Activated naive CD4-positive, alpha-beta T cell treated with anti-CD3 and anti-CD28 coated beads for 36 hours (primary cell): ENCODE measurements at regions of chr17 and their contacts with region 1.

Region 1: DNA sequence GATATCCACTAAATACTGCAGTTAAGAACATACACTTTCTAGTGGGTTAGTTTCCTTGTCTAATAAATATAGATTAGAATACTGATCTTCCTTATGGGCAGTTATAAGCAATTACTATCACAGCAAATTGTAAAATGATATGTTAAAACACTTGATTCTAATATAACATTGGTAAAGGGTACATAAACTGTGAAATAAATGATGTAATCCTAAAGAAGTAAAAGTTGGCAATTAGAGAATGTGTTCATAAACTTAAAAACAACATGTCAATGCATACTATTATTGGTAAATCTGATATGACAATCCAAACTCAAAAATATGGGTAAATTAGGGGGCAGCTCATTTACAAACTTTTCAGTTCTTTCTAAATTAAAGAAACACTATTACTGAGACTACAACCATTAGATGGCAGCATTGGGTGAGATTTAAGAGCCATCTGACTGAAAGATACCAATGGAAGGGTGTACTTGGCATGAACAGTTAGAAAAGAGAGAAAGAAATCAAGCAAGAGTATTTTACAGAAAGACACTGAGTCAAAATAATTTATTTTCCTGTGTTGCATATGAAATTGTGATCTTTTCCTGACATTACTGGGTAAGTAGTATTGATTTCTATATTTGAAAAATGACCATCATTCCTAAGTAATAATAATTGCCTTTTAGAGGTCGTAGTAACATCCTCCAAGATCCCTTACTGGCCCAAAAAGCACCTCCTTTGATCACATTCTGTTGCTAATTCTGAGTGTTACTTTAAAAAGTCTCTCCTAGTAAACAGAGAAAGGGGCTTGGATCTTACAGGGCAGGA is 119.6 kb downstream of the SPAG9 start:
- DNase-seq: peak; percentile 18
- H3K4me3 Mint-ChIP-seq: no peak overlapping the region
- H3K27ac Mint-ChIP-seq: no peak overlapping the region
- H3K4me1 Mint-ChIP-seq: no peaks in the 10 kb centered on the region
- H3K27me3 Mint-ChIP-seq: no peaks in the 10 kb centered on the region

Region 2: DNA sequence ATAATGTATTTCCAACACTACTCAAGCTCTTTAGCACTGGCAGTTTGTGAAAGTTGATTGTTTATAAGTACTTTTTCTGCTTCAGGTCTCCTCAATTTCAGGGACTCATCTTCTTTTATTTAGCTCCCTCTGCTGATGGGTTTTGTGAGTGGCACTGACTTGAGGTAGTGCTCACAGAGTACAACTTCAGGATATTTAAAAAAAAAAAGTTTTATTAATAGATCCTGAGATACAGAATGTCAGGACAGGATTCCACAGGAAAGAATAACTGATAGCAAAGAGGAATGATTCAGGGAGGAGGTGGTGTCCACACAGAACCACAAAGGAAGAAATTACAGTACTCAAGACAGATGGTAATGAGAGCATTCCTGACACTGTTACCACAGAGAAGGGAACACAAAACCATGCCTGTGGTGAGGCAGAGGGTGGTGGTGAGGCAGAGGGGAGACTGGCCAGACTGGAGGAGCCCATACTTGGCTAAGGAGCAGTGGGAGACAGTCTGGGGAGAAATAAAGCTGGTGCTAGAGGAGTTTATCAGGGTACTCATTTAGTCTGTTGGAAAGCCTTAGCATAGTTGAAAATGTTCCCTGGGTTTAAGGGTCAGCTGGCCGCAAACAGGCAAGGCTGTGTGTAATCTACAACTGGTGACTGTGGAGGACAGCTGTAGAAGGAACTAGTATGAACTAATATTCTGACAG is 55.9 kb after region 1 on chr17:
- CTCF ChIA-PET with region 1: interaction called, 36 read pairs
- intact Hi-C with region 1: loop called (anchors 1 kb)
- DNase-seq: peak; percentile 39
- H3K4me3 Mint-ChIP-seq: no peak overlapping the region
- H3K27ac Mint-ChIP-seq: no peak overlapping the region
- H3K4me1 Mint-ChIP-seq: no peaks in the 10 kb centered on the region
- H3K27me3 Mint-ChIP-seq: no peaks in the 10 kb centered on the region

Region 3: DNA sequence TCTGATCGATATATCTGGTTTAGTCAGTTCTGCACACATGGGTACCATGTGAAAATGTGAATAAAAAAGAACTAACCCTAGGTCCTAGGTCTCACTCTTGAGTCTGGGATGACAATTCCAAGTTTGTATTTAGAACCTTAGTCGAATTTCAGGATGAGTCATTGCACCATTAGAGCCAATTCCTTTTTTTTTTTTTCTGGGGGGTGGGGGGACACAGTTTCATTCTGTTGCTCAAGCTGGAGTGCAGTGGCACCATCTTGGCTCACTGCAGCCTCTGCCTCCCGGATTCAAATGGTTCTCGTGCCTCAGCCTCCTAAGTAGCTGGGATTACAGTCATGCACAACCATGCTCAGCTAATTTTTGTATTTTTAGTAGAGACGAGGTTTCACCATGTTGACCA is 78.0 kb after region 1 on chr17:
- CTCF ChIA-PET with region 1: no interaction called
- intact Hi-C with region 1: no loop called
- DNase-seq: no peak
- H3K4me3 Mint-ChIP-seq: no peak overlapping the region
- H3K27ac Mint-ChIP-seq: no peak overlapping the region
- H3K4me1 Mint-ChIP-seq: no peaks in the 10 kb centered on the region
- H3K27me3 Mint-ChIP-seq: no peaks in the 10 kb centered on the region